ENCODE measurements at regions of chr4 and their contacts with region 1.

Region 1: DNA sequence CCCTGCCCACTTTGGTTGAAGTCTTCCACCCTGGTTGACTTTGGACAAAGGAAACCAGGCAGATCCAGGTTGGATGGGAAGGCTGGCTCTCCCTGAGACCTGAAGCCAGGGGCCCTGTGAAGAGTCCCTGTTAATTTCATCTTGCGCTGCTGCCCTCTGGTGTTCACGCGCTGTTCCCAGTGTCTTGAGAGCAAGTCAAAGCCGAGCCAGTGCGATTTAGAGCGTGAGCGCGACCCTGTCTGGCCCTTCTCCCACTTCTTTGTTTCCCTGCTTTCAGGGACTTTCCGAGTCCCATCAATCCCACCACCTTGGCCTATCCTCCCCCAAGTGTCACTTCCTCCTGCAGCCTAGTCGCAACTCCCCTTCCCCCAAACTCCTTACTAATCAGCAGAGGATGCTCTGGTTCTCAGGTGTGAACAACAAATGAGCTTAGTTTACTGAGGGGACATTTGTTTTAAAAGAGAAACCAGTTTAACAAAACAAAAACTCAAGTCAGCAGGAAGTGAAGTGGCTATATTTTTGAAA is 25.8 kb upstream of the CHRNA9 start:
- DNase-seq: peak; percentile 56
- H3K4me3 ChIP-seq: peak overlapping the region; percentile 29
- H3K27ac ChIP-seq: no peak overlapping the region
- H3K27me3 ChIP-seq: no peaks in the 10 kb centered on the region
- CTCF ChIP-seq: peak; percentile 89

Region 2: GRCh38 chr4:39998659-39999345 is 310.5 kb before region 1 on chr4:
- CTCF ChIA-PET with region 1: no interaction called
- POLR2A ChIA-PET with region 1: no interaction called
- DNase-seq: no peak
- H3K4me3 ChIP-seq: no peak overlapping the region
- H3K27ac ChIP-seq: no peak overlapping the region
- H3K27me3 ChIP-seq: no peaks in the 10 kb centered on the region
- CTCF ChIP-seq: no peak

Region 3: GRCh38 chr4:40149960-40150385 is 159.3 kb before region 1 on chr4:
- CTCF ChIA-PET with region 1: interaction called, 30 read pairs
- POLR2A ChIA-PET with region 1: no interaction called
- DNase-seq: peak; percentile 30
- H3K4me3 ChIP-seq: no peak overlapping the region
- H3K27ac ChIP-seq: no peak overlapping the region
- H3K27me3 ChIP-seq: no peaks in the 10 kb centered on the region
- CTCF ChIP-seq: peak; percentile 71

Region 4: GRCh38 chr4:40269133-40269532 is 40.2 kb before region 1 on chr4:
- CTCF ChIA-PET with region 1: no interaction called
- POLR2A ChIA-PET with region 1: no interaction called
- DNase-seq: no peak
- H3K4me3 ChIP-seq: no peak overlapping the region
- H3K27ac ChIP-seq: no peak overlapping the region
- H3K27me3 ChIP-seq: no peaks in the 10 kb centered on the region
- CTCF ChIP-seq: no peak